ENCODE measurements at regions of chr22 and their contacts with region 1.

Region 1: DNA sequence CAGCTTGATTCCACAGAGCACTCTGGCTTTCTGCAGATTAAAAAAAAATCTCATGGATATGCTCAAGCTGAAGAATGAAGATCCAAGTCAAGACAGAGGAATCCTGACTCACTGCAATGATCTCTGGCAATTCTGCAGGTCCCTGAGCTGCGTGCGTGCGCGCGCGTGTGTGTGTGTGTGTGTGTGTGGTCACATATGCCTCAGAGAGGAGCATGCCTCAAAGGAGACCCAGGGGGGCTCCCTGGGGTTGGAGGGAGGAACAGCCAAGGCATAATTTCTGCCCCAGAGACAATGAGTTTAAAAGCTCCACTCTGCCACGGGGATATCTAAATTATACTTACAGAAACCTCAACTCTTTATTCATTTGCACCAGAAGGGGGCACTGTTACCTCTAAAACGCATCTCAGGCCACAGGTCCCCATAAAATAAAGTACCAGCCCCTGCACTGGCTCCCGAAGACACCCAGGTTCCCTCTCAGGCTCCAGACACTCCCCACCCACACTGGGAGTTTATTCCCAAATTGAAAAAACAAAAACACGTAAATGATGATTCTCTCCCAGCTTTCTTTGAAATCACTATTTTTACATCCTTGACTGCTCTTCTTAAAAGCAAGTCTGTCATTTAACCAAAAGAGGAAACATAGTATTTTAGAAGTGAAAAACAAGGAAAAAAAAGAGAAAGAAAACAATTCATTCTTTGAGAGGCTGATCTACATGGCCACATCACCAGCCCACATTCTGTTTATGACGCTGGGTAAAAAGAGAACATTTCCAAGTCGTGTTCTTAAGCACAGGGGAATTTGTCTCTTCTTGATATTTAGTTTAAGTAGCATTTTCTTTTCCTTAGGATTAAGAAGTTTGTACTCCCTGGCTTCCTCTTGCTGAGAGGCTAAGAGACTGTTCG is 401.0 kb downstream of the LARGE1 start:
- DNase-seq: no peak
- ATAC-seq: peak; percentile 65

Region 2: GRCh38 chr22:33579448-33580093 is 60.2 kb after region 1 on chr22:
- intact Hi-C with region 1: loop called (anchors 1 kb)
- DNase-seq: no peak
- ATAC-seq: peak; percentile 89

Region 3: DNA sequence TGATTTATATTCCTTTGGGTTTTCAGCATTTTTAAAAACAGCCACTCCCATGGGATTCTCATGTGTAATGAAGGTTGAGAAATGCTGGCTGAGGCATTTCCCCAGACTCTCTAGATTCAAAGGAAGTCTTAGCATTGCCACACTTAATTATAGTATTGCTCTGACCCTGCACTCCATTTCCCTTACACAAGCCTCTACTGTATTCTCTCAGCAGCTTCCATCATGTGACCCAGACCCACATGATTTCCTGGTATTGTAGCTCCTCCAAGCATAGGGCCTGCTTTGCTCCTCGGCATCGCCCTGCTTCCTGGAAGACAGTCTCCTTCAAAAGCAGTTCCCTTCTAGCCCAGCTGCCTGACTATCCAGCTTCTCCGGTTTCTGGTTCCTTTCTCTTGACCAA is 139.5 kb after region 1 on chr22:
- intact Hi-C with region 1: loop called (anchors 5 kb)
- DNase-seq: peak; percentile 53
- ATAC-seq: peak; percentile 69

Region 4: GRCh38 chr22:34105461-34106062 is 586.2 kb after region 1 on chr22:
- intact Hi-C with region 1: loop called (anchors 5 kb)
- DNase-seq: no peak
- ATAC-seq: peak; percentile 79